ENCODE measurements at regions of chr6 and their contacts with region 1.

Region 1: DNA sequence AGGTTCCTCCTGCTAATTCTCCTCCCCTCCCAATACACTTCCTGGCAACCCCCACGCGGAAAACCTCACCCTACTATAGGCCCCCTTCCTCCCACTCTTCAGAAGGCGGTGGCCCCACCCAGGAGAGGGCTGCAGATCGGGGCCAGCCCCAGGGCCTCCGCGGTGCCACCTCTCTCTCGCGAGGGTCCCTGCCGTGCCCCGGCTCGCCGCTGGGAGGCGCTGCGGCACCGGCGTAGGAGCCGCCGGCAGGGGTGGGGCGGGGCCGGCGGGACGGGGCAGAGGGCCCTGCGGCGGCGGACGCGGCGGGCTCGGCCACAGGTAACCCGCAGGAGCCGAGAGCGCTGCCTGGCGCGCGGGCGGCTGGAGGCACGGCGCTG is at the start of gene ANKRD6:
- DNase-seq: peak; percentile 84
- H3K4me3 ChIP-seq: peak within 1 kb of the TSS; percentile 74 to 86 (median 81)
- H3K27ac ChIP-seq: peak within 1 kb of the TSS; percentile 10 to 40 (median 18)
- H3K4me1 ChIP-seq: peaks cover 4 to 14% (median 6%) of the 10 kb centered on the region in 4 donors
- H3K27me3 ChIP-seq: peaks cover 6% of the 10 kb centered on the region
- CTCF ChIP-seq: peak; percentile 57 to 92 (median 86)
- EP300 ChIP-seq: no peak
- POLR2A ChIP-seq: no peak
- total RNA-seq, gene ANKRD6: 2.7 to 9.4 (median 6.6) TPM

Region 2: DNA sequence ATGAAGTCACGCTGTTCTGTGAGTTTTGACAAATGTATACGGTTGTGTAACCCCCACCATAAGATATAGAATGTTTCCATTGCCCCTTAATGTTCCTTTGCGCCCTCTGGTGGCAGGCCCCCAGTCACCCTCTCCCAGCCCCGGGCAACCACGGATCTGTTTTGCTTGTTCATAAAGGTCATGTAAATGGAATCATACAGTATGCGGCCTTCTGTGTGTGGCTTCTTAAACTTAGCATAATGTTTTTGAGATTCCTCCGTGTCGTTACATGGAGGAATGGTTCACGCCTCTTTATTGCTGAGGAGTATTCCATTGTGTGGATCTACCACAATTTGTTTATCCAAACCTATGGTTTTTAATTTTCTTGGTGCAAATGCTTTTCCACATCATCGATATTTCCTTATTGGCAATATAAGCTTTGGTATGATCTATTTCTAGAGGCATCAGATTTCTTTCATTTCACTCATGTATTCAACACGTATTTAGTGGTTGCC is 177.3 kb after region 1 on chr6:
- in situ Hi-C with region 1: loop called (anchors 5 to 10 kb)
- intact Hi-C with region 1: loop called (anchors 2 kb)
- DNase-seq: peak; percentile 81
- H3K4me3 ChIP-seq: no peak overlapping the region
- H3K27ac ChIP-seq: no peak overlapping the region
- H3K4me1 ChIP-seq: no peaks in the 10 kb centered on the region
- H3K27me3 ChIP-seq: no peaks in the 10 kb centered on the region
- CTCF ChIP-seq: peak; percentile 73 to 85 (median 80)
- EP300 ChIP-seq: no peak
- POLR2A ChIP-seq: no peak

Measured in transverse colon (tissue), 4 donors.